Activated T-helper 1 cell treated with anti-CD3 and anti-CD28 coated beads, Interleukin-12 subunit alpha, Interleukin-12 subunit beta, Interleukin-2, Interleukin-4 antibody, amounts not matched to agents 30 ng/mL and 10 ng/mL and 1 ng/mL, durations not matched to agents 14 hours and 24 hours and 36 hours (primary cell): ENCODE measurements at regions of chr4 and their contacts with region 1.

Region 1: GRCh38 chr4:75514131-75514948 is at the starts of genes RCHY1 and THAP6:
- DNase-seq: peak; percentile 90
- H3K4me3 Mint-ChIP-seq: no peak within 1 kb of the TSS
- H3K27ac Mint-ChIP-seq: peak within 1 kb of the TSS; percentile 100
- H3K4me1 Mint-ChIP-seq: peaks cover 47% of the 10 kb centered on the region
- H3K27me3 Mint-ChIP-seq: no peaks in the 10 kb centered on the region
- total RNA-seq, gene RCHY1: 25.0 and 25.6 TPM in 2 replicates
- total RNA-seq, gene THAP6: 16.3 and 17.3 TPM in 2 replicates

Region 2: GRCh38 chr4:74157561-74158465 is 1356.5 kb before region 1 on chr4 and contains the start of gene MTHFD2L:
- intact Hi-C with region 1: loop called (anchors 10 kb)
- DNase-seq: peak; percentile 80
- H3K4me3 Mint-ChIP-seq: peak within 1 kb of the TSS; percentile 93
- H3K27ac Mint-ChIP-seq: peak within 1 kb of the TSS; percentile 87
- H3K4me1 Mint-ChIP-seq: peaks cover 30% of the 10 kb centered on the region
- H3K27me3 Mint-ChIP-seq: peaks cover 22% of the 10 kb centered on the region
- total RNA-seq, gene MTHFD2L: 8.9 and 9.9 TPM in 2 replicates

Region 3: DNA sequence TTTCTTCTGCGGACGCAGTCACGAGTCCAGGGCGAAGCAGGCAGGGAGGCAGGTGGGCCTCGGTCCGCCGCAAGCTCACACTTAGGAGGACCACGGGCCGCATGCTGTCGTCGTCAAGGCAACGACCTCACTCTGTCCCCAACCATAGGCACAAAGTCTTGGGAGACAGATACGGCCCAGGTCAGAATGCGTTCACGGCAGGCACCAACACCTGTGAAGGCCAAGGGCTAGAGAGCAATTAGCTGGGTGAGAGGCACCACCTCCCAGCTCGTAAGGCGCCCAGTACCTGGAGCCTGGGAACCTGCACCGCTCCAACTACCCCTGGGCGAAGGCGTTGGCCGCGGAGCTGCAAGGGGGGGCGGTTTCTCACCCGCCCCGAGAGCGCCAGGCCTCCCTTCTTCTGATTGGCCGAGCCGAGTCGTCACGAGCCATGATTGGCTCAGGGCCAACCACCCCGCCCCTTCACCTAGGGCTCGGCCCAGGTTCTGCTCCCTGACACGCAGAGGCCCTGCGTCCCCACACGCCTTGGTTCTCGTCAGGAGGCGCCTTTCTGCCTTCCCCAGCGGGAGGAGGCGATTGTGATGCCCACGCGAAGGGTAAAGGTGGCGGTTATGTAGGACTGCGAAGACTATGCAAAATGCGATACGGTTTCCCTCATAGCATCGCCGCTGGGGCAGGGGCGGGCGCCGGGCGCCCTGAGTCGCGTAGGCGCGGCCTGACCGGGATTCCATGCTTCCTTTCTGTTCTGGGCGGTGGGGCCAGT is 116.0 kb after region 1 on chr4 and contains the start of gene CDKL2:
- intact Hi-C with region 1: loop called (anchors 1 kb)
- DNase-seq: peak; percentile 89
- H3K4me3 Mint-ChIP-seq: peak within 1 kb of the TSS; percentile 86
- H3K27ac Mint-ChIP-seq: peak within 1 kb of the TSS; percentile 40
- H3K4me1 Mint-ChIP-seq: peaks cover 20% of the 10 kb centered on the region
- H3K27me3 Mint-ChIP-seq: peaks cover 11% of the 10 kb centered on the region
- total RNA-seq, gene CDKL2: 0.16 and 0.22 TPM in 2 replicates

Region 4: GRCh38 chr4:75673027-75673958 is 159.0 kb after region 1 on chr4 and contains the start of gene G3BP2:
- intact Hi-C with region 1: loop called (anchors 1 kb)
- DNase-seq: peak; percentile 96
- H3K4me3 Mint-ChIP-seq: peak within 1 kb of the TSS; percentile 96
- H3K27ac Mint-ChIP-seq: peak within 1 kb of the TSS; percentile 98
- H3K4me1 Mint-ChIP-seq: peaks cover 40% of the 10 kb centered on the region
- H3K27me3 Mint-ChIP-seq: no peaks in the 10 kb centered on the region
- total RNA-seq, gene G3BP2: 143 and 144 TPM in 2 replicates

Region 5: DNA sequence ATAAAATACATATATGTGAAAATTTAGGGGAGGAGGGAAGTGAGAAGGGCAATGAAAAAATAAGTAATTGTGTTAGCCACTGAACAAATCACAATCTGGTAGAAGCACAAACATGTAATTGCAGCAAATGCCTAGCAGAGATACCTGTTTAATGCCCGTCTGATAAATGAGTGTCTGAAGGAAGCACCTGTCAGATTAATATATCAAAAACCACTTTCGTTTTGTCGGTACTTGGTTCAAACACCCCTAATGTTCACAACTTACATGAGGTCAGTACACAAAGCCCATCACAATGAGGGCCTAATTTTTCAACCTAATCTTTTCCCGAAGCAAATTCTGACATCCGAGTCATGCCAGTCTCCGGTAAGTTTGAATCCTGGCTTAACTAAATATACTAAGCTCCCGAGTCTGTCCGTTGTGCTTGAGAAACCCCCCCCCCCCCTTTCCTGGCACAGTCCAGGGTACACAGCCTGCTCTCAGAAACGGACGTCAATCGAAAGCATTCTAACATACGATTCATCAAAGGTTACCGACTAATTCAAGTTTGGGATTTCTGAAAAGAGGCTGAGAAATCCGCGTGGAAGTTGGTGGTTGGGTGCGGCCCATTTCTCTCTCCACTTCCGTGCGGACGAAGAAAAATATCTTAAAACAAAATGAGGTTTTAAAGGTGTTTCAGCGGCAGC is 475.6 kb after region 1 on chr4:
- intact Hi-C with region 1: loop called (anchors 1 kb)
- DNase-seq: no peak
- H3K4me3 Mint-ChIP-seq: peak overlapping the region; percentile 93
- H3K27ac Mint-ChIP-seq: peak overlapping the region; percentile 83
- H3K4me1 Mint-ChIP-seq: peaks cover 27% of the 10 kb centered on the region
- H3K27me3 Mint-ChIP-seq: no peaks in the 10 kb centered on the region

Region 6: DNA sequence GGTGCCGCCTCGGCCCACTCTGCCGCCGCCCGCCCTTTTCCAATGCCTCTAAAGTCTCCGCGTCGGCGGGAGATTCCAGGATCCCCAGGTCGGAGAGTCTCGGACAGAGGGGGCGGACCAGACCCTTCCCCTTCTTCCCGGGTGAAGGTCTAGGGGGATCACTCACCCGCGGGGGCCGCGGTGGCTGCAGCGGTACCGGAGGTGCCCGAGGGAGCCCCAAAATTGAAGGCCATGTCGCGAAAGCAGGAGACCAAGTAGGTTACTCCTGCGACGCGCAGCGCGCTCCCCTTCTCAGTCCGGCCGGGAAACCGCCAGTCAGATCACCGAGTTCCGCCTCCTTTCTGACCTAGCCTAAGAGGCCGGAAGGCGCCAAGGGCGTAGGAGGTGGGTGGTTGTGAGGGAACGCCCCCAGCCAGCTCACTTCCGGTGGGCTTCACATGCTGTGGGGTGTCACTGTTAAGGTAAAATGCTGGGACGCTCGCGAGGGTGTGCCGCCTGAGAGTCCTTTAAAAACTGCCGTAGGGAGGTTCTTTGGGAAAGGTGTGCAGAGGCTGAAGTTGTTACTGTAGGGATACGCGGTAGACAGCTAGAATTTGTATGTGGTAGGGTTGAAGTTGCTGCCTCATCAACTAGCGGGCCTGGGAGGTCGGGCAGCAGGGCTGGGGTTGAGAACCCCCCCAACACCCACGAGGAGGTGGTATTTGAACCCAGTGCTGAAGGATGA is 634.0 kb after region 1 on chr4 and contains the start of gene NUP54:
- intact Hi-C with region 1: loop called (anchors 1 kb)
- DNase-seq: peak; percentile 94
- H3K4me3 Mint-ChIP-seq: peak within 1 kb of the TSS; percentile 99
- H3K27ac Mint-ChIP-seq: peak within 1 kb of the TSS; percentile 97
- H3K4me1 Mint-ChIP-seq: peaks cover 35% of the 10 kb centered on the region
- H3K27me3 Mint-ChIP-seq: no peaks in the 10 kb centered on the region
- total RNA-seq, gene NUP54: 70.6 and 75.1 TPM in 2 replicates

Region 7: DNA sequence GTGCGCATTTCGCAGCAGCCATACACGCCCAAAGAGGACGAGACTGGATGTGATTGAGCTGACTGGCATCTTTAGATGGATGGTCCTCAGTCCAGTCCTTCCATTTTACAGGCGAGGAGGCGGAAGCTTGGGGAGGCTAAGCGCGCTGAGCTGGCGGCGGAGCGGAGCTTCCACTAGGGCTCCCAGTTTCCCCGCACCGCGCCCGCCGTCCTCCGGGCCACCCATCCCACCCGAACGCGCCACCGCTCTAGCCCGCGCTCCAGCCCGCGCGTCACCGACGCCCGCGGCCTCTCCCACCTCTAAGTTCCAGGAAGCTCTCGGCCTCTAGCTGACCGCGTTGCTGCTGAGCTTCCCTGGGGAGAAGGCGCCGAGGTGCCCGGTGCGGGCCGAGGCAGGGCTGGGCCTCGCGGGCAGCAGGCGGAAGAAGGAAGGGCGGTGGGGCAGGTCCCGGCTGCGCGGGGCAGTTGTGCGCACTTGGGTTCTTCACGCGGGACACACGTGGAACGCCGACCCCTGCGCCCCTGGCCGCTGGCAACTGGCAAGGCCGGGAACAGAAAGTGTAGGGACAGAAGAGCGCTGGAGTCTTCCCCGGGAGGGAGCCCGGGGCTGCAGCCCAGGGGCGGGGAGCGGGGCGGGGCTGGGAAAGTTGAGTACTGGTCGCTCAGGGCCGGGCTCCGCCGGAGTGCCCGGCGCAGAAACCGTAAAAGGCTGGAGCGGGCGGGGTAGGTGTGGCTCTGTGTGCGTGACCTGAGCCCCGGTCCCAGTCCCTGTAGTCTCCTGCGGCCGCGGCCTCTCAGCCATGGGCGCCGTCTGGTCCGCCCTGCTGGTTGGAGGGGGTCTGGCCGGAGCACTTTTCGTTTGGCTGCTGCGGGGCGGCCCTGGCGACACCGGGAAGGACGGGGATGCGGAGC is 791.9 kb after region 1 on chr4 and contains the start of gene STBD1:
- intact Hi-C with region 1: loop called (anchors 10 kb)
- DNase-seq: peak; percentile 24
- H3K4me3 Mint-ChIP-seq: peak within 1 kb of the TSS; percentile 68
- H3K27ac Mint-ChIP-seq: peak within 1 kb of the TSS; percentile 24
- H3K4me1 Mint-ChIP-seq: peaks cover 48% of the 10 kb centered on the region
- H3K27me3 Mint-ChIP-seq: peaks cover 16% of the 10 kb centered on the region
- total RNA-seq, gene STBD1: 0.51 and 0.57 TPM in 2 replicates